HCT116 (cell line): ENCODE measurements at regions of chr12 and their contacts with region 1.

Region 1: DNA sequence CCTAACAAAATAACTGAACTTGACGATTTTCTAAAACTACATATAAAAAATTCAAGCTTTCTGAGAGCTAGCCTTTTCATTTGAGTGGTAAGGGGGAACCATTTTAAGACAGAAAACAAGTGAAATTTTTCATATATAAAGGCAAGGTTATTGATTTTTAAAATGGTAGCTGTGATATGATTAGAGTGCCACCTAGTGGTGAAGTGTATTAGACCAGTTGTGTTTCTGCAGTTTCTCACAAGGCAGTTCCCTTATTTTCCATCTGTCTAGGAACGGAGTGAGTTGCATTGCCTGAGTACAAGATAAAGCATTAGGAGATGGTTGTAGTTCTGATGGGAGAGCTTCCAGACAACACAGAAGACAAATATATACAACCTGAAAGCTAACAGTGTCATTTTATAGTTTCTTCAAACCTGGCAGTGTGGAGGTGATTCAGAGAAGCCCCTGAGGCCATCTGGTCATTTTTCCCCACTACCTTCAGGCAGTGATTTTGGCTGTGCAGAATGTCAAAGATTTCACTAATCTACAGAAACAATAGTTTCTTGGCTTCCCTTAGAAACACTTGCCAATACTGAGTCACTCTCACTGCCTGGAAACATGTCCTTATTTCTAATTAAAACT is 180.8 kb downstream of the C12orf50 start:
- DNase-seq: peak; percentile 54
- ATAC-seq: peak; percentile 79
- H3K4me3 ChIP-seq: no peak overlapping the region
- H3K27ac ChIP-seq: no peak overlapping the region
- H3K4me1 ChIP-seq: no peaks in the 10 kb centered on the region
- H3K27me3 ChIP-seq: no peaks in the 10 kb centered on the region
- CTCF ChIP-seq: peak; percentile 66 to 91 (median 73)
- POLR2A ChIP-seq: no peak
- RAD21 ChIP-seq: peak; percentile 89

Region 2: DNA sequence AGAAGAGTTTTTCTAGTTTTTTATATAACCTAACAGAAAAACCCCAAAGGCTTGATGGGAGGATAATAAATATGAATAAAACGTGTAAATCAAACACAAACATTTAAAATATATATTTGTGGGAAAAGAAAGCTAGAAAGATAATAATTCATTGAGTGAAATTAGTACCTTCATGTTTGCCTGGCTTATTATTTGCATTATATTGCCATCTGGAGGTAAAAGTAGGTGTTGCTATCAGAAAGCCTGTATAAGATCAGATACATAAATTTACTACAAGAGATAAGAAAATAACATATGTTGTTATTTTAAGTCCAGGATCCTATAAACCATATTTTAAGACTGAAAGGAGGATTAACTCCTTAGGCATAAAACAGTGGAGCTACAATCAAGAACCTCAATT is 1896.5 kb before region 1 on chr12:
- CTCF ChIA-PET with region 1: no interaction called
- POLR2A ChIA-PET with region 1: no interaction called
- RAD21 ChIA-PET with region 1: no interaction called
- intact Hi-C with region 1: loop called (anchors 2 kb)
- DNase-seq: peak; percentile 19
- ATAC-seq: no peak
- H3K4me3 ChIP-seq: no peak overlapping the region
- H3K27ac ChIP-seq: no peak overlapping the region
- H3K4me1 ChIP-seq: no peaks in the 10 kb centered on the region
- H3K27me3 ChIP-seq: no peaks in the 10 kb centered on the region
- CTCF ChIP-seq: peak; percentile 34 to 64 (median 40); a peak in 4 of 6 replicates
- POLR2A ChIP-seq: no peak
- RAD21 ChIP-seq: peak; percentile 65

Region 3: DNA sequence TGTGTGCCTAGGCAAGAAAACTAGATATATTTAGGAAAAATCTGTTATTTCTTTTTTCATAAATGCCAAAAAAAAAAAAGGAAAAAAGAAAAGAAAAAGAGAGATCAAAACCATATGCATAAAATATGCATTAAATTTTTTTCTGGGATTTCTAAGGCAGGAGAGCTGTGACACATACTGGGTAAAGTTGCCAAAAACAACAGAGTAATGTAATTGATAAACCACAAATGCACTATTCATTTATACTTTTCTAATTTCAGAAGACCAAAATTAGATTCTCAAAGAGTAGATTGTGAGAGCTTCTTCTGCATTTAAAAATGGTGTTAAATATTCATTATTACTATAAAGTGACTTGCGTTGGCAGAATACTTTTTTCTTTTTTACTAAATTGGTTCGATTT is 918.4 kb before region 1 on chr12:
- CTCF ChIA-PET with region 1: no interaction called
- POLR2A ChIA-PET with region 1: no interaction called
- RAD21 ChIA-PET with region 1: no interaction called
- intact Hi-C with region 1: loop called (anchors 5 kb)
- DNase-seq: no peak
- ATAC-seq: no peak
- H3K4me3 ChIP-seq: no peak overlapping the region
- H3K27ac ChIP-seq: no peak overlapping the region
- H3K4me1 ChIP-seq: no peaks in the 10 kb centered on the region
- H3K27me3 ChIP-seq: no peaks in the 10 kb centered on the region
- CTCF ChIP-seq: no peak
- POLR2A ChIP-seq: no peak
- RAD21 ChIP-seq: no peak

Region 4: DNA sequence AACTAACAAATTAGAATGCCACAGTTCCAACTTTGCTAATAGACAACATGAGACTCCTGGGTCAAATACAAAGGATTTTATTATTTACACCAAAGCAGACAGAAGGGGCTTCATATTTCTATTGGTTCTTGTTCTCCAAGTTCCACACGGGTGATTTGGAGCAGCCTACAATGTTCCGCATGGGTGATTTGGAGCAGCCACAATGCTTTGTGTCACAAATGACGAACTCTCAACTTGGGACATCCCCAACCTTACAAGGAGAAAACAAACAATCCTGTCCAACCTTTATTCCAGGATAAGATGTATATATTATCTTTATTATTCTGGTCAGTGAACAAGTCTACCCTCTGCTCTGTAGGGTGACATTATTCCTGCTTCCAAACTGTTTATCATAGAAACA is 897.9 kb before region 1 on chr12:
- CTCF ChIA-PET with region 1: no interaction called
- POLR2A ChIA-PET with region 1: no interaction called
- RAD21 ChIA-PET with region 1: no interaction called
- intact Hi-C with region 1: loop called (anchors 10 kb)
- DNase-seq: no peak
- ATAC-seq: no peak
- H3K4me3 ChIP-seq: no peak overlapping the region
- H3K27ac ChIP-seq: no peak overlapping the region
- H3K4me1 ChIP-seq: no peaks in the 10 kb centered on the region
- H3K27me3 ChIP-seq: no peaks in the 10 kb centered on the region
- CTCF ChIP-seq: no peak
- POLR2A ChIP-seq: no peak
- RAD21 ChIP-seq: no peak

Region 5: GRCh38 chr12:87274594-87275245 is 573.6 kb before region 1 on chr12:
- CTCF ChIA-PET with region 1: no interaction called
- POLR2A ChIA-PET with region 1: no interaction called
- RAD21 ChIA-PET with region 1: no interaction called
- intact Hi-C with region 1: loop called (anchors 5 kb)
- DNase-seq: peak; percentile 19
- ATAC-seq: peak; percentile 77
- H3K4me3 ChIP-seq: no peak overlapping the region
- H3K27ac ChIP-seq: no peak overlapping the region
- H3K4me1 ChIP-seq: no peaks in the 10 kb centered on the region
- H3K27me3 ChIP-seq: no peaks in the 10 kb centered on the region
- CTCF ChIP-seq: peak; percentile 26 to 74 (median 67); a peak in 5 of 6 replicates
- POLR2A ChIP-seq: no peak
- RAD21 ChIP-seq: peak; percentile 50

Region 6: DNA sequence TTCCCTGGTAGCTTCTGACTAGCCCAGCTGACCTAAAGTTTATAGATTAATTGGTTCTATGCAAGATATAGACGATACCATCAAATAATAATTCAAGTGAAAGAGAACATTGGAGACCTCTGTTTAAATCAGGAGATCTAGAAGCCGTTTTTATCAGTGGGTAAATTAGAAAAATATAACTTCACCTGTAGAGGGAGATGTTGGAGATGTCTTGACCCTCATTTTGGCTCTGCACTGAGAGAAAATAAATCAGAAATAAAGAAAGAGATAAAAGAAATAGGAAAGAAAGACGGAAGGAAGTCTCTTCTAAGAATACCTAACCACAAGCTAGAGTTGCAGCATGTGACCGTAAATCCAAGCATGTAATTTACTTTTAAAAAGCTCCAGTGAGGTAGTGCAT is 503.7 kb before region 1 on chr12:
- CTCF ChIA-PET with region 1: interaction called, 3 read pairs
- POLR2A ChIA-PET with region 1: no interaction called
- RAD21 ChIA-PET with region 1: no interaction called
- intact Hi-C with region 1: loop called (anchors 2 kb)
- DNase-seq: no peak
- ATAC-seq: peak; percentile 38; the same call in 1 of the 2 replicates
- H3K4me3 ChIP-seq: no peak overlapping the region
- H3K27ac ChIP-seq: no peak overlapping the region
- H3K4me1 ChIP-seq: no peaks in the 10 kb centered on the region
- H3K27me3 ChIP-seq: no peaks in the 10 kb centered on the region
- CTCF ChIP-seq: peak; percentile 27 to 50 (median 37); a peak in 4 of 6 replicates
- POLR2A ChIP-seq: no peak
- RAD21 ChIP-seq: peak; percentile 64